ENCODE measurements at regions of chr13 and their contacts with region 1.

Region 1: GRCh38 chr13:44141725-44142539 is 231.7 kb upstream of the SERP2 start:
- DNase-seq: peak; percentile 94
- H3K4me3 ChIP-seq: peak overlapping the region; percentile 78
- H3K27ac ChIP-seq: no peak overlapping the region
- H3K4me1 ChIP-seq: peaks cover 36% of the 10 kb centered on the region
- CTCF ChIP-seq: no peak

Region 2: DNA sequence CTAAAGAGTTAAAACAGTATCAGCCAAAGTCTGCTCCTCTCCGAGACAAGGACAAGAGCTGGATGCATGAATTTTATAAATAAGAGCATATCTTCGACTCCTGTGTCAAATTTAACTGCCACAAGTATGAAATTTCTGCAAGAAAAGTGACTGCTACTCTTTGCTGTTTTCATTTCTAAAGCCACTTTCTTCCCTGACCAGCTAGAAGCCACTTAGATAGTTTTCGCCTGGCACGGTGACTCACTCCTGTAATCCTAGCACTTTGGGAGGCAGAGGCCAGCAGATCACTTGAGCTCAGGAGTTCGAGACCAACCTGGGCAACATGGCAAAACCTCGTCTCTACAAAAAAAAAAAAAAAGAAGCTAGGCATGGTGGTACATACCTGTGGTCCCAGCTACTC is 416.5 kb before region 1 on chr13:
- CTCF ChIA-PET with region 1: no interaction called
- POLR2A ChIA-PET with region 1: no interaction called
- intact Hi-C with region 1: no loop called
- DNase-seq: no peak
- H3K4me3 ChIP-seq: no peak overlapping the region
- H3K27ac ChIP-seq: no peak overlapping the region
- H3K4me1 ChIP-seq: no peaks in the 10 kb centered on the region
- CTCF ChIP-seq: no peak

Region 3: GRCh38 chr13:44068737-44069136 is 73.2 kb before region 1 on chr13:
- CTCF ChIA-PET with region 1: no interaction called
- POLR2A ChIA-PET with region 1: no interaction called
- intact Hi-C with region 1: no loop called
- DNase-seq: no peak
- H3K4me3 ChIP-seq: no peak overlapping the region
- H3K27ac ChIP-seq: no peak overlapping the region
- H3K4me1 ChIP-seq: no peaks in the 10 kb centered on the region
- CTCF ChIP-seq: no peak

Region 4: GRCh38 chr13:44116562-44117332 is 25.2 kb before region 1 on chr13:
- CTCF ChIA-PET with region 1: interaction called, 19 read pairs
- POLR2A ChIA-PET with region 1: no interaction called
- intact Hi-C with region 1: no loop called
- DNase-seq: peak; percentile 19
- H3K4me3 ChIP-seq: no peak overlapping the region
- H3K27ac ChIP-seq: no peak overlapping the region
- H3K4me1 ChIP-seq: peaks cover 13% of the 10 kb centered on the region
- CTCF ChIP-seq: no peak

Measured in OCI-LY7 (cell line).